PC-3 (cell line): ENCODE measurements at regions of chr3 and their contacts with region 1.

Region 1: DNA sequence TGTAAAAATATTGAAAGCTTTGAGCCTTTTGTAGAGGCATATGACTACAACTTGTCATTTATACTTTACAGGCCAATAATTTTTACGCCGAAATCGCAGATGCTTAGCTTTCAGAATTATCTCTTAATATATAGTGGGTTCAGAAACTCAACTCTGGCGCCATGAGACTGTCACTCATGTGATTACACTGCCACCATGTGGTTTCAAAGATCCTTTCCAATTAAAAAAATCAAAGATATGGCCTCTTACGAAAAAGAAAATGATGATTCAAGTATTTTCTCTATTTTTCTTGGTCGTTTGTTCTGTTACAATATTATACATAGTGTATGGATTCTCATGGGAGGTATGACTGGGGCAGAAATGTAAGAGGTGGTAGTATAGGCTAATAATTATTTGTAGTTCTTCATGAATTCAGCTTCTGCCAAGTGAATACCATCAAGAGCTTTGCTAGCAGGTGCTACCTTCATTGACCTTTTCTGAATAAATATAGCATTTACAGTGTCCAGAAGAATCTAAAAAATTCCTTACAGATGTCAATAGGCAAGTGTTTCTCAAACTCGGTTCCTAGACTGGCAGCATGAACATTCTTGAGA is 751.7 kb upstream of the GOLIM4 start:
- DNase-seq: peak; percentile 66
- ATAC-seq: peak; percentile 77
- H3K4me3 ChIP-seq: no peak overlapping the region
- H3K27ac ChIP-seq: no peak overlapping the region
- H3K4me1 ChIP-seq: no peaks in the 10 kb centered on the region; the same call in 1 of the 2 replicates
- H3K27me3 ChIP-seq: peaks cover 31% of the 10 kb centered on the region
- CTCF ChIP-seq: peak; percentile 89

Region 2: GRCh38 chr3:168047190-168047795 is 800.1 kb before region 1 on chr3:
- CTCF ChIA-PET with region 1: no interaction called
- POLR2A ChIA-PET with region 1: no interaction called
- intact Hi-C with region 1: loop called (anchors 1 kb)
- DNase-seq: peak; percentile 90
- ATAC-seq: peak; percentile 81
- H3K4me3 ChIP-seq: no peak overlapping the region
- H3K27ac ChIP-seq: no peak overlapping the region
- H3K4me1 ChIP-seq: no peaks in the 10 kb centered on the region
- H3K27me3 ChIP-seq: no peaks in the 10 kb centered on the region
- CTCF ChIP-seq: peak; percentile 97

Region 3: GRCh38 chr3:168467115-168467714 is 380.2 kb before region 1 on chr3:
- CTCF ChIA-PET with region 1: interaction called, 5 read pairs
- POLR2A ChIA-PET with region 1: no interaction called
- intact Hi-C with region 1: loop called (anchors 2 kb)
- DNase-seq: peak; percentile 64
- ATAC-seq: peak; percentile 98
- H3K4me3 ChIP-seq: no peak overlapping the region
- H3K27ac ChIP-seq: no peak overlapping the region
- H3K4me1 ChIP-seq: no peaks in the 10 kb centered on the region
- H3K27me3 ChIP-seq: no peaks in the 10 kb centered on the region
- CTCF ChIP-seq: peak; percentile 79

Region 4: GRCh38 chr3:168620826-168621225 is 226.6 kb before region 1 on chr3:
- CTCF ChIA-PET with region 1: interaction called, 4 read pairs
- POLR2A ChIA-PET with region 1: no interaction called
- intact Hi-C with region 1: loop called (anchors 1 kb)
- DNase-seq: peak; percentile 58
- ATAC-seq: peak; percentile 69
- H3K4me3 ChIP-seq: no peak overlapping the region
- H3K27ac ChIP-seq: no peak overlapping the region
- H3K4me1 ChIP-seq: no peaks in the 10 kb centered on the region
- H3K27me3 ChIP-seq: 0 out of 2 replicates have a peak, but pooled peaks cover under 1% of the 10 kb centered on the region
- CTCF ChIP-seq: peak; percentile 77

Region 5: GRCh38 chr3:170469151-170470062 is 1622.0 kb after region 1 on chr3:
- CTCF ChIA-PET with region 1: no interaction called
- POLR2A ChIA-PET with region 1: interaction called, 25 read pairs
- intact Hi-C with region 1: no loop called
- DNase-seq: peak; percentile 68
- ATAC-seq: peak; percentile 72
- H3K4me3 ChIP-seq: no peak overlapping the region; the same call in 1 of the 2 replicates
- H3K27ac ChIP-seq: peak overlapping the region; percentile 21
- H3K4me1 ChIP-seq: peaks cover 56% of the 10 kb centered on the region
- H3K27me3 ChIP-seq: no peaks in the 10 kb centered on the region
- CTCF ChIP-seq: no peak